Naive thymus-derived CD4-positive, alpha-beta T cell (primary cell): ENCODE measurements at regions of chr10 and their contacts with region 1.

Region 1: GRCh38 chr10:45241865-45242520 is 73.4 kb downstream of the OR13A1 start:
- DNase-seq: no peak
- ATAC-seq: no peak
- H3K4me3 ChIP-seq: no peak overlapping the region
- H3K4me3 Mint-ChIP-seq: no peak overlapping the region
- H3K27ac ChIP-seq: no peak overlapping the region
- H3K27ac Mint-ChIP-seq: peak overlapping the region in 2 of 9 donors; percentile 51 to 70
- H3K4me1 ChIP-seq: no peaks in the 10 kb centered on the region
- H3K4me1 Mint-ChIP-seq: peaks cover 0 to 32% (median 19%) of the 10 kb centered on the region in 7 donors
- H3K27me3 ChIP-seq: no peaks in the 10 kb centered on the region
- H3K27me3 Mint-ChIP-seq: no peaks in the 10 kb centered on the region

Region 2: DNA sequence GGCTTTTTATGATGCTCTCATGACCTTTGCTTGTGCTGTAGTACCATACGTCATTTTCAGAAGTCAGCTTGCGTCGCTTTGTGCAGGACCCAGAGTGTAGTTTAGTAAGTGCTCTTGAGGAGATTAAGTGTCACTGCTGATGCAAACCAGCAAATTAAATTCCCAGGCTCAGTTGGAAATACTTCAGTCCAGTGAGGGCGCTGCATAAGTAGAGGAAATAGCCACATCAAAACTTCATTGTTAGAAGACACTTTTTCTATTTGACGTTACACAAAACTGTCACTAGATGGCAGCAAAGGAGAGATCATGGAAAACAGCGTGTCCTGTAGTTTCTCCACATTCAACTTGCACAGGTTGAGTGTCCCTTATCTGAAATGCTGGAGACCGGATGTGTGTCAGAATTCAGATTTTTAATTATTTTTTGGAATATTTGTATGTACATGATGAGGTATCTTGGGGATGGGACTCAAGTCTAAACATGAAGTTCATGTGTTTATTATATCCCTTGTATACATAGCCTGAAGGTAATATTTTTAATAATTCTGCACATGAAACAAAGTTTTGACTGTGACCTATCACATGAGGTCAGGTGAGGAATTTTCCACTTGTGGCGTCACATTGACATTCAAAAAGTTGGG is 233.3 kb before region 1 on chr10:
- CTCF ChIA-PET with region 1: no interaction called
- POLR2A ChIA-PET with region 1: no interaction called
- intact Hi-C with region 1: loop called (anchors 2 to 5 kb)
- DNase-seq: peak in 7 of 9 donors; percentile 33 to 68 (median 56)
- ATAC-seq: peak; percentile 91
- H3K4me3 ChIP-seq: no peak overlapping the region
- H3K4me3 Mint-ChIP-seq: no peak overlapping the region
- H3K27ac ChIP-seq: no peak overlapping the region
- H3K27ac Mint-ChIP-seq: no peak overlapping the region
- H3K4me1 ChIP-seq: no peaks in the 10 kb centered on the region
- H3K4me1 Mint-ChIP-seq: peaks cover 0 to 7% (median 3%) of the 10 kb centered on the region in 7 donors
- H3K27me3 ChIP-seq: no peaks in the 10 kb centered on the region
- H3K27me3 Mint-ChIP-seq: peaks cover 0 to 8% (median 0%) of the 10 kb centered on the region in 5 donors

Region 3: GRCh38 chr10:45204954-45205775 is 36.8 kb before region 1 on chr10:
- CTCF ChIA-PET with region 1: no interaction called
- POLR2A ChIA-PET with region 1: no interaction called
- intact Hi-C with region 1: no loop called
- DNase-seq: no peak
- ATAC-seq: no peak
- H3K4me3 ChIP-seq: no peak overlapping the region
- H3K4me3 Mint-ChIP-seq: no peak overlapping the region
- H3K27ac ChIP-seq: no peak overlapping the region
- H3K27ac Mint-ChIP-seq: no peak overlapping the region
- H3K4me1 ChIP-seq: no peaks in the 10 kb centered on the region
- H3K4me1 Mint-ChIP-seq: no peaks in the 10 kb centered on the region
- H3K27me3 ChIP-seq: no peaks in the 10 kb centered on the region
- H3K27me3 Mint-ChIP-seq: peaks cover 21 to 59% (median 40%) of the 10 kb centered on the region in 5 donors

Region 4: DNA sequence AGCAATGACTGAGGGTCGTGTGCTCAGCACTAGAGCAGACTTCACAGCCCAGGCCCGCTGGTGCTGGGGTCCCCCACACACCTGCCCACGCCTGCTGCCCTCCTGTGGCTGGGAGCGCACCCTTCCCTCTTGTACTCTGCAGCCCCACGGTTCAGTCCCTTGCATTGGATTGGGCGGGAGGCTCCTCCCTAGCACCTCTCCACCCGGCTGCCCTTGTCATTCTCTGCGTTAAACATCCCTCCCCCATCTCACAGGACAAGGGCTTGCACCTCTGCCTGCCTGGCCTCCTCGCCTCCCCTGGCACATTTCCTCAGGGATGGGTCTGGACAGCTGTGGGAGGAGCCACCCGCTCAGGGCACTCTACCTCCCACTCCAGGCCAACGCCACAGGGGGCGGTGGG is 200.7 kb after region 1 on chr10:
- CTCF ChIA-PET with region 1: no interaction called
- POLR2A ChIA-PET with region 1: no interaction called
- intact Hi-C with region 1: no loop called
- DNase-seq: no peak
- ATAC-seq: no peak
- H3K4me3 ChIP-seq: no peak overlapping the region
- H3K4me3 Mint-ChIP-seq: no peak overlapping the region
- H3K27ac ChIP-seq: no peak overlapping the region
- H3K27ac Mint-ChIP-seq: no peak overlapping the region
- H3K4me1 ChIP-seq: no peaks in the 10 kb centered on the region
- H3K4me1 Mint-ChIP-seq: peaks cover 0 to 6% (median 0%) of the 10 kb centered on the region in 7 donors
- H3K27me3 ChIP-seq: no peaks in the 10 kb centered on the region
- H3K27me3 Mint-ChIP-seq: peaks cover 0 to 7% (median 0%) of the 10 kb centered on the region in 5 donors